HEK293T (cell line): ENCODE measurements at regions of chr22 and their contacts with region 1.

Region 1: DNA sequence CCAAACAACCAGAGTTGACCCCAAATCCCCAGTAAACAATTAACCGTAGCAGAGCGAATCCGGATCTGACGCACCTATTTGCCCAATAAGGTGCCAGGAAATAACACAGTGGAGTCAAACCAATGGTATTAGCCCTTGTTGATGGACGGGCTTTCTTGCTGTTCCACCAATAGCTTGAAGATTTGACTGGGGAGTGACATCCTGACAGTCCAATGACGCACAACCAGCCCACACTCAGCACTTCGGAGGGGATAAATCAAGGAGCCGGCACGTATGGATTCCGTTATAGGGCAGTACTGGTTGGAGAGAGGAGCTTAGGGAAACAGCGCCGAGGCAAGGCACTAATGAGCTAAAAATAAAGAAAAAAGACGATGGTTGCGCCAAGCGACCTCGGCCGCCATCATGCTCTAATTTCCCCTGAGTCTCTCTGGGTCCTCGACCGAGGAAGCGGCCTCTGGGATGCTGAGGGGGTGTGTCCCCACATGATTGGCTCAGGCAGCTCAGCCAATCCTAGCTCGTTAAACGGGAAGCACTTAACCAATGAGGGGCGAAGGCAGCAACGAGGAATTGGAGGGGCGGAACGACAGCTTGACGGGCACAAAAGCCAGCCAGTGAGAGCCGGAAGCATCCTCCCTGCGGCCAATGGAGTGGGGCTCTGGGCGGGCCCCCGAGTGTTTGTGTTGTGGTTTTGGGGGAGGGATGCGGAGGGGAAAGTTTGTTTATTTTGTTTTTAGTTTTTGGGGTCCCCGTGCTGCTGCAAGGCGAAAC is 49.5 kb downstream of the FAM83F start:
- DNase-seq: peak; percentile 99

Region 2: GRCh38 chr22:39908737-39909136 is 135.5 kb before region 1 on chr22:
- CTCF ChIA-PET with region 1: no interaction called
- POLR2A ChIA-PET with region 1: no interaction called
- DNase-seq: no peak

Region 3: DNA sequence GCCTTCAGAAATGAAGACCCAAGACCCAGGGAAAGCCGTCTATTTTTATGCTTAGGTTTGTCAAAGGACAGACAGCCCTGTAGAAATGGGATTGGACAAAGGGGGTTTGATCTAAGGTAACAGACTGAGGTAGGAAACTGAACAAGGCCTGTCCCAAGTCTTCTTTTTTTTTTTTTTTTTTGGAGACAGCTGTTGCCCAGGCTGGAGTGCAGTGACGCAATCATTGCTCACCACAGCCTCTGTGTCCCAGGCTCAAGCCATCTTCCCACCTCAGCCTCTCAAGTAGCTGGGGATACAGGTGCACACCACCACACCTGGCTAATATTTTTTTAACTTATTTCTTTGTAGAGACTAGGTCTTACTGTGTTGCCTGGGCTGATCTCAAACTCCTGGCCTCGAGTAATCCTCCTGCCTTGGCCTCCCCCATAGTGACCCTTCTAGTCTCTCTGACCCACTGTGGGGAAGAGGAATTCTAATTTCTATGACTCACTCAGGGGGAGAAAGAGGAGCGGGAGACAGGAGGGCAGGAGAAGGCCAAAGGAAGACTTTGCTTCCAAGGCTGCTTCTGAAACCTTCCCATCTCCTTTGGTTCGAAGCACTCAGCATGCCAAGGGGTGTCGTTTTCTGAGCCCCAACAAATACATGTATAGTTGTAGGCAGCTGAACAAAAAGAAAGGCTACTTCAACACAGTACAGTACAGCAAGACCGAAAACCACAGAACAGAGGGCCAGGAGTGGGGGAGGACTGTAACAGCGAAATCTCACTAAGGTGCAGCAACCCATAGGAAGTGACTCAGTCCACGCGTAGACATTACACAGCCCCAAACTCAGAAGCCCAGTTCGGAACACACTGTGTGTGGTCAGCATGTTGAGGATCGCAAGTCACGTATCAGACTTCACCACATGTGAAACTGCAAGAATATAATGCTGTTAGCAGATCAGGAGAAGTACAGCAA is 83.2 kb before region 1 on chr22:
- CTCF ChIA-PET with region 1: no interaction called
- POLR2A ChIA-PET with region 1: no interaction called
- DNase-seq: no peak

Region 4: GRCh38 chr22:40024201-40025061 is 19.9 kb before region 1 on chr22:
- CTCF ChIA-PET with region 1: interaction called, 5 read pairs
- POLR2A ChIA-PET with region 1: interaction called, 15 read pairs
- DNase-seq: peak; percentile 91

Region 5: DNA sequence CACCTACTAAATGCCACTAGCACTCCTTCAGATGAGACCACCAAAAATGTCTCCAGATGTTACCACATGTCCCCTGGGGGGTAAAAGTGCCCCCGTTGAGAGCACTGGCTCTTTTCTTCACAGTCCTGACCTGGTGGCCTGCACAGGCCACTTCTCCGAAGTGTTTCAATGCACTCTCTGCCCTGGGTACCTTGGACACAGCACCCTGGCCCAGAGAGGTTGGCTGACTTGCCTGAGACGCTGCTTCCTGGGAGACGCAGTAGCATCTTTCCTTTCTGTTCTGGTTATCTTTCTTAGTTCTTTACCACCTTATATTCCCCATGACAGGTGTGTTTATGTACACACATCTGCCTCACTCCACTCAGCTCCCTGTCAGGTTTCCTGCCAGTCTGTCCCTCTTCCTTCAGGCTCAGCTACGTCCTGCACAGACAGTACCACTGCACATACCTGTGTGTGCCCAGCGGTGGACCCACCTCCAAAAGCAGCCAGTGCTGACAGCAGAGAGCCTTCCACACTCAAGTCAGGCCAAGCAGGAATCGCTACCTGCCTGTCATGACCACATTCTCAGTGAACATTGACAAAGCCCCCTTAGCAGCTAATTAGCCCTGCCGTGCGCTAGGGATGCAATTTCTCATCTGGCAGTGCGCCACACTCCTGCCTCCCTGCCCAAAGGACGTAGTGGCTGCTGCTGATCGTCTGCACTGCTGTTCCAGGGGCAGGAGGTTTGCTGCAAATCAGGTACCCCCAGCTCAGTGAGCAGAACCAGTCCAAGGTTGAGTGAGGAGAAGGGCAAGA is 10.5 kb before region 1 on chr22:
- CTCF ChIA-PET with region 1: no interaction called
- POLR2A ChIA-PET with region 1: interaction called, 15 read pairs
- DNase-seq: no peak

Region 6: DNA sequence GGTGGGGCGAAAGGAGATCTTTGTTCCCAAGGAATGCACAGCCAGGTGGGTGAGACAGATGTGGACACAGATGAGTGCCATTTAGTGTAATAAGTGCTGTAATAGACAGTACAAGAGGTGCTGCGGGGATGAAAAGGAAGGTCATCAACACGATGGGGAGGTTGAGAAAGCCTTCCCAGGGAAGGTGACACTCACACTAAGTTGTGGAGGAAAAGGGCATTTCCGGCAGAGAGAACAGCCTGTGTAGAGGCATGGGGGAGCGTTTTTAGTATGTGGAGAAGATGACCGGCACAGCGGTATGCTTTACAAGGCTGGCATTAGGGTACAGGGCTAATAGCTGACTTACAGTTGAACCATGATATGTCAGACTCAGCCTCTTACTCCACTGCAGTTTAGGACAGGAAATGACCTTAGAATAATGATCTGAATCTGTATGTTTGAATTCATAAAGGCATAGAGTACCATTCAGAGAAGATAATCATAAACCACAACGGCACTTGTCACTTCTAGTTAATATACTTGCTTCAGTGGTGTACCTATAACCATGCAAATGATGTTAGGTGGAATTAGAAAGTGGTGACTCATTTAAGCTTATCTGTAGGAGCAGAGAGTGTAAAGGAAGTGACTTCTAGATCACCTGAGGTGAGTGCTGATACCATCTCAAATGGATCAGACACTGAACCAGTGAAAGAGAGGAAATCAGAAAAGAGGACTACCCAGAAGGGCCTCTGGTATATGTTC is 11.0 kb after region 1 on chr22:
- CTCF ChIA-PET with region 1: no interaction called
- POLR2A ChIA-PET with region 1: interaction called, 29 read pairs
- DNase-seq: no peak

Region 7: GRCh38 chr22:40177738-40178416 is 133.6 kb after region 1 on chr22 and contains the start of gene TNRC6B:
- CTCF ChIA-PET with region 1: no interaction called
- POLR2A ChIA-PET with region 1: interaction called, 37 read pairs
- DNase-seq: peak; percentile 87

Region 8: GRCh38 chr22:40190501-40190900 is 146.2 kb after region 1 on chr22:
- CTCF ChIA-PET with region 1: interaction called, 4 read pairs
- POLR2A ChIA-PET with region 1: interaction called, 12 read pairs
- DNase-seq: no peak

Region 9: GRCh38 chr22:40346178-40347118 is 302.2 kb after region 1 on chr22 and contains the start of gene ADSL:
- CTCF ChIA-PET with region 1: interaction called, 5 read pairs
- POLR2A ChIA-PET with region 1: interaction called, 47 read pairs
- DNase-seq: peak; percentile 93